ENCODE measurements at regions of chr6 and their contacts with region 1.

Region 1: DNA sequence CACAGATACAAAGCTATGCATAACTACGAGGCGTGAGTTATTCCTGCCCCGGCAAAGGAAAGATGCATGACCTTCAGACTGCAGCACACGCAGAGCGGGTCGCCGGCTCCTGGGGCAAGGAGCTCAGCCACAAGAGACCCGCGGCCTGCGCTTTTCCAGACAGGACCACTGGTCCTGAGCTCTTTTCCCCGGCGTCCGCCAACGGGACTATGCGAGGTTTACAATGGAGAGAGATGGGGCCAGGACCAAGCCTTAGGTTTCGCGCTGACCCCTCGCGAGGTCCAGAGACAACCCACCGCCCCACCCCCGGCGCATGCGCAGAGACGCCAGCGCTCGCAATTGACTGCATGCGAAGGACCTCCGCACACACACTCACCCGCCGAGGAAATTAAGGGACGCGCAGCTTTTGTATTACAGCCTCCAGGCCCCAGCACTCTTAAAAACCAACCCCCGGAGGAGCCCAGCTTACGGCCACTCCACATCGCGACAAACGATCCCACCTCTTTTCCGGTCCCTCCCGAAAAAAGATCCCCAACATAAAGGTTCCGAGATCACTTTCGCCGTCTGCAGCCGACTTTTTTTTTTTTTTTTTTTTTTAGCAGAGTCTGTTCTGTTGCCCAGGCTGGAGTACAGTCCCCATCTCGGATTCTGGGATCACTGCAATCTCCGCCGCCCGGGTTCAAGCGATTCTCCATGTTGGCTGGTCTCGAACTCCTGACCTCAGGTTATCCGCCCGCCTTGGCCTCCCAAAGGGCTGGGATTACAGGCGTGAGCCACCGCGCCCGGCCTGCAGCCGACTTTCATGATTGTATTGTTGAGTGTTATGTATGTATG is at the start of gene COQ3:
- DNase-seq: peak; percentile 64
- ATAC-seq: peak; percentile 85
- H3K4me3 ChIP-seq: peak within 1 kb of the TSS; percentile 97
- H3K27ac ChIP-seq: peak within 1 kb of the TSS; percentile 83
- H3K4me1 ChIP-seq: no peaks in the 10 kb centered on the region
- H3K27me3 ChIP-seq: no peaks in the 10 kb centered on the region
- CTCF ChIP-seq: no peak
- total RNA-seq, gene COQ3: 6.7 and 15.6 TPM in 2 replicates

Region 2: DNA sequence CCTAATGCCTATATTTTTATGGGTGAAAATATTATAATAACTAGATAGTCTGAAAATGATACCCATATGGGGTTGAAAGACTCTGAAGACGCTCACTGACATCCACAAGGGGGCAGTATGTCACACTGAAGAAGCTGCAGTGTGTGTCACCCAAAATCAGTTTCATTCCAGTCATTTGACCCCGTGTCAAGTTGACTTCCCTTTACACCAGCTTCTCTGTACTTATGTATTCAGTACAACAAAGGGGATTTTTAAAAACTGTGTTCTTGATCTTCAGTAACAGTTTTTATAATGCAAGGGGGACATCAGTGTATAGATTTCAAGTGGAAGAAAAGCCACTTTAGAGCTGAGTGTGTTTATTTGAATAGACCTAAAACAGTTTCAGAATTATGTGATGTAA is 63.8 kb before region 1 on chr6:
- CTCF ChIA-PET with region 1: interaction called, 5 read pairs
- POLR2A ChIA-PET with region 1: no interaction called
- intact Hi-C with region 1: loop called (anchors 1 kb)
- DNase-seq: peak; percentile 73
- ATAC-seq: peak; percentile 94
- H3K4me3 ChIP-seq: no peak overlapping the region
- H3K27ac ChIP-seq: no peak overlapping the region
- H3K4me1 ChIP-seq: no peaks in the 10 kb centered on the region
- H3K27me3 ChIP-seq: no peaks in the 10 kb centered on the region
- CTCF ChIP-seq: peak; percentile 83

Region 3: DNA sequence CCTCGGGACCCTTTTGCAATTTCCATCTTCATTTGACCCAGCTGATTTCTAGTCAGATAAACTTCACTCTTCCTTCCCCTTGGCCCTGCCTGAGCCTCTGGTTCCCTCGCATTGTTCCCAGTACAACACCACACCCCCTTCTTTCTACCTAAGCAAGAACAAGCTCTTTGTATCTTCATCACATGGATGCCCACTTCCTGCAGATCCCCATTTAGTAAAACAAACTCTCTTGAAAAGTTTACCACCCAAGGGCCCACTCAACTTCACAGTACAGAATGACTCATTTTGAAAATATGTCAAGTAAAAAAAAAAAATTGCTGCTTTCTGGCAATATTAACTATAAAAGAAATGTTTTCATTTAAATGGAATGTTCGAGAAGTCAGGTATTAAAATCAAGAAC is 49.6 kb before region 1 on chr6:
- CTCF ChIA-PET with region 1: interaction called, 11 read pairs
- POLR2A ChIA-PET with region 1: no interaction called
- intact Hi-C with region 1: loop called (anchors 5 kb)
- DNase-seq: peak; percentile 62
- ATAC-seq: peak; percentile 39
- H3K4me3 ChIP-seq: no peak overlapping the region
- H3K27ac ChIP-seq: no peak overlapping the region
- H3K4me1 ChIP-seq: peaks cover 41% of the 10 kb centered on the region
- H3K27me3 ChIP-seq: no peaks in the 10 kb centered on the region
- CTCF ChIP-seq: no peak

Region 4: GRCh38 chr6:99349171-99350141 is 44.5 kb before region 1 on chr6 and contains the start of gene FAXC:
- CTCF ChIA-PET with region 1: no interaction called
- POLR2A ChIA-PET with region 1: no interaction called
- intact Hi-C with region 1: loop called (anchors 5 kb)
- DNase-seq: peak; percentile 58
- ATAC-seq: peak; percentile 84
- H3K4me3 ChIP-seq: peak within 1 kb of the TSS; percentile 82
- H3K27ac ChIP-seq: no peak within 1 kb of the TSS
- H3K4me1 ChIP-seq: peaks cover 21% of the 10 kb centered on the region
- H3K27me3 ChIP-seq: no peaks in the 10 kb centered on the region
- CTCF ChIP-seq: peak; percentile 42; the same call in 1 of the 2 replicates
- total RNA-seq, gene FAXC: 3.9 and 5.4 TPM in 2 replicates

Region 5: GRCh38 chr6:99409672-99410071 is 15.8 kb after region 1 on chr6:
- CTCF ChIA-PET with region 1: no interaction called
- POLR2A ChIA-PET with region 1: no interaction called
- intact Hi-C with region 1: no loop called
- DNase-seq: no peak
- ATAC-seq: no peak
- H3K4me3 ChIP-seq: no peak overlapping the region
- H3K27ac ChIP-seq: no peak overlapping the region
- H3K4me1 ChIP-seq: no peaks in the 10 kb centered on the region
- H3K27me3 ChIP-seq: no peaks in the 10 kb centered on the region
- CTCF ChIP-seq: no peak

Region 6: GRCh38 chr6:99425647-99426453 is 31.9 kb after region 1 on chr6:
- CTCF ChIA-PET with region 1: no interaction called
- POLR2A ChIA-PET with region 1: interaction called, 4 read pairs
- intact Hi-C with region 1: loop called (anchors 2 kb)
- DNase-seq: peak; percentile 70
- ATAC-seq: peak; percentile 65
- H3K4me3 ChIP-seq: peak overlapping the region; percentile 82
- H3K27ac ChIP-seq: peak overlapping the region; percentile 83
- H3K4me1 ChIP-seq: peaks cover 25% of the 10 kb centered on the region
- H3K27me3 ChIP-seq: no peaks in the 10 kb centered on the region
- CTCF ChIP-seq: peak; percentile 49